PC-9 (cell line): ENCODE measurements at regions of chr19 and their contacts with region 1.

Region 1: DNA sequence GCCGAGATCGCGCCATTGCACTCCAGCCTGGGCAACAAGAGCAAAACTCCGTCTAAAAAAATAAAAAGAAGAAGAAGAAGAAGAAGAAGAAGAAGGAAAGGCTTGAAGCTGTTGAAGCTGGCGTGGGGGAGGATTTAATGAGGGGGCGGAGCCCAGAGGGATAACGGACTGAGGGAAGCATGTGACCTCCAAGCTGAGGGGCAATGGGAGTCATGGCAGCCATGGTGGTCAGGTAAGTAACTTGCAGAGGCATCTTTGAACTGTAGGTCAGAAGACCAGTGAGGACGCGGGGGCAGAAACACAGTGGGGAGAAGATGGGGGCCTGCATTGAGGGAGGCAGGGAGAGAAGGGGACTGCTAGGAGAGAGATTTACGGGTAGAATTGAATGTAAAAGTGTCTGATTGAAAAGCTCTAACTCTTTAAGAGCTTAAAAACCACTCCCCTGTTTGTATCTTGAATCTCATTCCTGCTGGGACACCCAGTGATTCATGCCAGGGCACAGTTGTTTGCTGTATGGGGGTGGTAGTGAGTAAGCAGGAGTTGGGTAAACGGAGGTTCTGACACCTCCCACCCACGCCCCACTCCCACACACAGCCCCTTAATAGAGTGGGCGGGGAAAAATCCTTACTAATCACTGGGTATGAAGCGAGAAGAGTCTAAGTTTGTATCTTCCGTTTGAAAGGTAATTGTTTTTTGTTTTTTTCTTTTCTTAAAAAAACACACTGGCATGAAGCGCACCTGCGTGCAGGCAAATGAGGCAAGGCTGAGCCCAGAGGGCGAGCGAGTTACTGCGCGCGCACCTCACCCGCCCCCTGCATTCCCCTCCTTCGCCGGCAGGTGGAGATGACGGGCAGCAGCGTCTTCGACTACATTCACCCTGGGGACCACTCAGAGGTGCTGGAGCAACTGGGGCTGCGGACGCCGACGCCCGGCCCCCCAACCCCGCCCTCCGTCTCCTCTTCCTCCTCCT is 13.0 kb downstream of the TMEM160 start:
- DNase-seq: peak; percentile 92 to 98
- H3K4me3 ChIP-seq: peak overlapping the region; percentile 54
- H3K27ac ChIP-seq: peak overlapping the region; percentile 72
- H3K4me1 ChIP-seq: peaks cover 19% of the 10 kb centered on the region
- H3K27me3 ChIP-seq: no peaks in the 10 kb centered on the region
- CTCF ChIP-seq: peak; percentile 98

Region 2: GRCh38 chr19:46753420-46754155 is 281.8 kb before region 1 on chr19:
- CTCF ChIA-PET with region 1: interaction called, 5 read pairs
- POLR2A ChIA-PET with region 1: no interaction called
- intact Hi-C with region 1: loop called (anchors 10 kb)
- DNase-seq: peak in 1 of 2 experiments; percentile 48
- H3K4me3 ChIP-seq: no peak overlapping the region
- H3K27ac ChIP-seq: no peak overlapping the region
- H3K4me1 ChIP-seq: no peaks in the 10 kb centered on the region
- H3K27me3 ChIP-seq: no peaks in the 10 kb centered on the region
- CTCF ChIP-seq: peak; percentile 61

Region 3: DNA sequence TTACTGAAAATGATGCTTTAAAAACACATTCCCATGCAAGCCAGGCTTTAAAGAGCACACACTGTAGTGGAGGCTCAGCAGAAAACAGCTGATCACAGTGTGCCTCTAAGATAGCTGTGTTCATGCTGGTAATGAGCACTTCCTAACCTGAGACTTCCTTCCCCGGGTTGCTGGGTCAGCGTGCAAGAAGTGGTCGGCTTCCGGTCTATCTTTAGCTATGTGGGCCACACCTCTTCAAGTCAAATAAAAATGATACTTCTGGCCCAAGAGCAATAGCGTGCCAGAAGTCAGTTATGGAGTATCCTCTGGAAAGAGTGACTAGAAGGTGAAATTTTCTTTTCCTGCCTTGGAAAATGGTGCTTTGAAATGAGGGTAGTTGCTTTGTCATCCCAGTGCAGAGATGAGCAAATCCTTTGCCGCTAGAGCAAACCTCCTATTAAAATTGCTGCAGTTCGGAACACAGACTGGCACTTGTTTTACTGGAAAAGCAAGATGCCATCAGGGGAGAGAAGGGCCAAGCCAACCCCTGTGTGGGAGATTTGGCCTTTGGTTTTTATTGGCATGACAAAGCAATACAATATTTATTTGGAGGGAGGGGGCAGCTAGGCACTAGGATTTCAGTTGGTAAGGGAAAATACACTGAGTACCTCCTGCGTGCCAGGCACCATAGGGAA is 110.4 kb before region 1 on chr19:
- CTCF ChIA-PET with region 1: no interaction called
- POLR2A ChIA-PET with region 1: no interaction called
- intact Hi-C with region 1: no loop called
- DNase-seq: peak; percentile 66 to 98
- H3K4me3 ChIP-seq: peak overlapping the region; percentile 50
- H3K27ac ChIP-seq: peak overlapping the region; percentile 95
- H3K4me1 ChIP-seq: peaks cover 65% of the 10 kb centered on the region
- H3K27me3 ChIP-seq: no peaks in the 10 kb centered on the region
- CTCF ChIP-seq: 0 out of 2 replicates have a peak, but pooled peaks have one; percentile 8

Region 4: DNA sequence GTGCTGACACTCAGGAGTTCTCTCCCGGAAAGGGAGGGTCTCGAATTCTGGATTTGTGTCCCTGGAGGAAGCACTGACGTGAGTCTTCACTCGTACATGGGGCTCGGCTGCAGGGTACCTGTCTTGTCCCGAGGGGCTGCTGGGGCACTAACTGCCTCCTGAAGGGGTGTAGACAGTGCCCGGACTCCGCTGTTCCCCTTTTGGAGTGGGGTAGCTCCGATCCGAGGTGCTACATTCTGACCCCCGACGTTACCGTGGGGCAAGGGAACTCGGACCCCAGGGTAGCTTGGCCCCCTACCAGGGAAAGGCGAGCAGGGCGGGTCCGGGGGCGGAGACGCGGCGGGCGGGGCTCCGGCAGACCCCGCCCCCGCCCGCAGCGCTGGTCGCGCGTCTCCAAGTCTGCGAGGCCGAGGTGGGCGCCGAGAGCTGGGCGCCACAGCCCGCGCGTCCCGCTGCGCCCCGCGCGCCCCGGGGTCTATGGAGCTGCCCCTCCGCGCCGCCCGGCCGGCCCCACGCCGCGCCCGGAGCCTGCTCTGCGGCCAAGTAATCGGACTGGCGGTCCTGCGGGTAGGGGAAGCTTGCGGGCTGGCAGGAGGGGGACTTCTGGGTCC is 15.9 kb before region 1 on chr19 and contains the start of gene NPAS1:
- CTCF ChIA-PET with region 1: interaction called, 15 read pairs
- POLR2A ChIA-PET with region 1: interaction called, 10 read pairs
- intact Hi-C with region 1: no loop called
- DNase-seq: no peak
- H3K4me3 ChIP-seq: no peak within 1 kb of the TSS
- H3K27ac ChIP-seq: no peak within 1 kb of the TSS
- H3K4me1 ChIP-seq: 0 out of 2 replicates have a peak, but pooled peaks cover 5% of the 10 kb centered on the region
- H3K27me3 ChIP-seq: peaks cover 42% of the 10 kb centered on the region
- CTCF ChIP-seq: no peak
- total RNA-seq, gene NPAS1: 1.4 and 3.7 TPM in 2 replicates

Region 5: GRCh38 chr19:47075179-47075810 is 39.9 kb after region 1 on chr19:
- CTCF ChIA-PET with region 1: no interaction called
- POLR2A ChIA-PET with region 1: no interaction called
- intact Hi-C with region 1: loop called (anchors 1 kb)
- DNase-seq: no peak
- H3K4me3 ChIP-seq: no peak overlapping the region
- H3K27ac ChIP-seq: no peak overlapping the region
- H3K4me1 ChIP-seq: peaks cover 5% of the 10 kb centered on the region
- H3K27me3 ChIP-seq: no peaks in the 10 kb centered on the region
- CTCF ChIP-seq: no peak

Region 6: GRCh38 chr19:47130591-47131227 is 95.3 kb after region 1 on chr19 and contains the start of gene SAE1:
- CTCF ChIA-PET with region 1: interaction called, 5 read pairs
- POLR2A ChIA-PET with region 1: interaction called, 39 read pairs
- intact Hi-C with region 1: loop called (anchors 1 kb)
- DNase-seq: peak; percentile 96 to 97
- H3K4me3 ChIP-seq: peak within 1 kb of the TSS; percentile 86
- H3K27ac ChIP-seq: peak within 1 kb of the TSS; percentile 30
- H3K4me1 ChIP-seq: peaks cover 40% of the 10 kb centered on the region
- H3K27me3 ChIP-seq: no peaks in the 10 kb centered on the region
- CTCF ChIP-seq: no peak; the same call in 1 of the 2 replicates
- total RNA-seq, gene SAE1: 133 and 148 TPM in 2 replicates